ENCODE measurements at regions of chr20 and their contacts with region 1.

Region 1: DNA sequence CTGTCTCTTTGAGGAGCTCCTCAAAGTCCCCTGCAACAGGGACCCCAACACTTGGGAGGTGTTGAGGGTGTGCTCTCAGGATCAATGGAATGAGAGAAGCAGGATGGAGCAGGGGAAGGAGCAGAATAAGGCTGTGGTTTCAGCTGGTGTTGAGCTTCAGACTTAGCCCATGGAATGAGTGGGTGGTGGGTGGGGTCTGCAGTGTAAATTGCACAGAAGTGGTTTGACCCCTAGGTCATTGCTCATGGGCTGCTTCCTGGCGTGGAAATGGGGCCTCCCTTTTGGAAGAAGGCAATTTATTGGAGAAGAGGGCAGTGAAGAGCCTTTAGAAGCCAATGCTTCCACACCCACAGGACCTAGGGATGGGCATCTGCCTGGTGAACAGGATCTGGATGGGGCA is 37.0 kb upstream of the KCNG1 start:
- DNase-seq: no peak
- H3K4me3 Mint-ChIP-seq: no peak overlapping the region
- H3K27ac Mint-ChIP-seq: no peak overlapping the region
- H3K4me1 Mint-ChIP-seq: peaks cover 32% of the 10 kb centered on the region
- H3K27me3 Mint-ChIP-seq: peaks cover 10% of the 10 kb centered on the region

Region 2: GRCh38 chr20:50980851-50981713 is 78.8 kb before region 1 on chr20:
- intact Hi-C with region 1: loop called (anchors 1 kb)
- DNase-seq: peak; percentile 30
- H3K4me3 Mint-ChIP-seq: no peak overlapping the region
- H3K27ac Mint-ChIP-seq: peak overlapping the region; percentile 93
- H3K4me1 Mint-ChIP-seq: peaks cover 16% of the 10 kb centered on the region
- H3K27me3 Mint-ChIP-seq: peaks cover 12% of the 10 kb centered on the region

Region 3: DNA sequence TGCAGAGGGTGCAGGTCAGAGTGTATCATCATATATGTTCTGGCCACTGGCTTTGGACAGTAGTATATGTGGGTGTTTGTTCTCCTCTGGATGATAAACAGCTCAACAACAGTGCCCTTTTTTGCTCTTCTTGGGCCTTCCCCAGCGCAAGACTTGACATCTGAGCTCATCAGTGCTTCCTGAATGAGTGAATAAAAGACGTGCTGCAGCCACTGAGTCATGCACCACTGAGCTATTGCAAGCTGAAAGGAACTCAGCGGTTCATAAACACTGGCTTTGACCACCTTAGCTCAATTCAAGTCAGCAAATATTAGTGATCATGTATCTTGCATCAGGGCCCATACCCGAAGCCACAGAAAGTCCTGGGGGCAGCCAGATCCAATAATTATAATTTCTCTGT is 68.3 kb after region 1 on chr20:
- intact Hi-C with region 1: loop called (anchors 2 kb)
- DNase-seq: no peak
- H3K4me3 Mint-ChIP-seq: no peak overlapping the region
- H3K27ac Mint-ChIP-seq: no peak overlapping the region
- H3K4me1 Mint-ChIP-seq: peaks cover 6% of the 10 kb centered on the region
- H3K27me3 Mint-ChIP-seq: peaks cover 9% of the 10 kb centered on the region

Region 4: DNA sequence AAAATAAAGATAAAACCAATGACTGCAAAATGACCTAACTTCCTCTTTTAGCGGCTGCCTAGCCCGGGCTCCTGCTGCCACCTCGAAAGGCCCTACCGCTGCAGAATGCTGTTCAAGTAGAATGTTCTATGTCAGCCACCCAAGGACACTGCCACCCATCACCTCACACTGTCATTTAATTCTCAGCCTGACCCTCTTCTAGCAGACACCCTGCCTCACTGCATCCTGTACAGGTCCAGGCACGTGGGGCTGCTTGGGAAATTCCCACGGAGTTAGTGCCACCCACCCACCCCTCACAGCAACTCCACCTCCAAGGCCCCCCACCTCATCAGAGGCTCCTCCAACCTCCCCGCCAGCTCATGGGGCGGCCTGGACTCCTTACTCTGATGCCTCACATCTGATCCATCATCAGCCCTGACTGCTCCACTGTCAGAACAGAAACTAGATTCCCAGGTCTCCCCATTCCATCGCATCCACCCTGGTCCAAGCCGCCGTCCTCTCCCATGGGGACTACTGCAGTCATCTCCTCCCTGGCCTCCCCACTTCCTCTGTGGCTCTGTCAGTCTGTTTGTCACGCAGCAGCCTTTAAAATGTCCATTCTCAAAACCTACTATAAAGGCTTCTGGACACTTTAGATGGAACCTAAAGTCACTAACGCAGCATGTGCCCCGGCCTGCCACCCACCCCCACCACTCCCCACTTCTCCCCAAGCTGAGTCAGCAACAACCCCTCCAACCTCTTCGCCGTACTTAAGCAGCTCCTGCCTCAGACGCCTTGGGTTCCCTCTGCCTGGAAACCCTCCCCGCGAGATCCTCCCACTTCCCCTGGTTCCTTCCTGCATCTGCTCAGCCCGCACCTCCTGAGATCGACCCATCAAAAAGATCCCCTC is 465.6 kb after region 1 on chr20:
- intact Hi-C with region 1: loop called (anchors 5 kb)
- DNase-seq: no peak
- H3K4me3 Mint-ChIP-seq: peak overlapping the region; percentile 72
- H3K27ac Mint-ChIP-seq: peak overlapping the region; percentile 96
- H3K4me1 Mint-ChIP-seq: peaks cover 80% of the 10 kb centered on the region
- H3K27me3 Mint-ChIP-seq: no peaks in the 10 kb centered on the region

Measured in activated T-helper 1 cell treated with anti-CD3 and anti-CD28 coated beads, Interleukin-12 subunit alpha, Interleukin-12 subunit beta, Interleukin-2, Interleukin-4 antibody, amounts not matched to agents 30 ng/mL and 10 ng/mL and 1 ng/mL, durations not matched to agents 14 hours and 24 hours and 36 hours (primary cell).